A549 (cell line): ENCODE measurements at regions of chr17 and their contacts with region 1.

Region 1: GRCh38 chr17:16453493-16453851 is 38.1 kb downstream of the TRPV2 start:
- DNase-seq: no peak
- ATAC-seq: no peak
- H3K4me3 ChIP-seq: no peak overlapping the region
- H3K27ac ChIP-seq: no peak overlapping the region
- H3K4me1 ChIP-seq: no peaks in the 10 kb centered on the region
- CTCF ChIP-seq: no peak
- EP300 ChIP-seq: no peak
- POLR2A ChIP-seq: no peak
- RAD21 ChIP-seq: no peak

Region 2: DNA sequence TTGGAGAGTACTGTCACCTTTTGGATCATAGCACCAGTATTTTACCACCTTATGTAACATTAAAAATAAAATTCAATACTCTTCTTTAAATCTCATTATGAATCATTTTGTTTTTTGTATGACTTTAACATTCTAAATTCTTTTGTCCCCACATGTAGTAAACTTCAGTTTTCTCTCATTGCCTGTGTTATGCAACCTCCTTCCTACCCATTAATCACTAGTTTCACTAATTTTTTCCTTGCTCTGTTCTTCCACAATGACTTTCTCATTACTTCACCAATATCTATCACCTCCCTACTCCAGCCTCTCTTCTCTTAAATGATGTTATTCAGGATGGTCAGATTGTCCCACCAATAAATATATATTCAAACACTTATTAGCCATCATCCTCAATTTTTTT is 385.1 kb before region 1 on chr17:
- CTCF ChIA-PET with region 1: no interaction called
- POLR2A ChIA-PET with region 1: no interaction called
- DNase-seq: no peak
- ATAC-seq: no peak
- H3K4me3 ChIP-seq: no peak overlapping the region
- H3K27ac ChIP-seq: no peak overlapping the region
- H3K4me1 ChIP-seq: no peaks in the 10 kb centered on the region
- CTCF ChIP-seq: no peak
- EP300 ChIP-seq: no peak
- POLR2A ChIP-seq: no peak
- RAD21 ChIP-seq: no peak

Region 3: DNA sequence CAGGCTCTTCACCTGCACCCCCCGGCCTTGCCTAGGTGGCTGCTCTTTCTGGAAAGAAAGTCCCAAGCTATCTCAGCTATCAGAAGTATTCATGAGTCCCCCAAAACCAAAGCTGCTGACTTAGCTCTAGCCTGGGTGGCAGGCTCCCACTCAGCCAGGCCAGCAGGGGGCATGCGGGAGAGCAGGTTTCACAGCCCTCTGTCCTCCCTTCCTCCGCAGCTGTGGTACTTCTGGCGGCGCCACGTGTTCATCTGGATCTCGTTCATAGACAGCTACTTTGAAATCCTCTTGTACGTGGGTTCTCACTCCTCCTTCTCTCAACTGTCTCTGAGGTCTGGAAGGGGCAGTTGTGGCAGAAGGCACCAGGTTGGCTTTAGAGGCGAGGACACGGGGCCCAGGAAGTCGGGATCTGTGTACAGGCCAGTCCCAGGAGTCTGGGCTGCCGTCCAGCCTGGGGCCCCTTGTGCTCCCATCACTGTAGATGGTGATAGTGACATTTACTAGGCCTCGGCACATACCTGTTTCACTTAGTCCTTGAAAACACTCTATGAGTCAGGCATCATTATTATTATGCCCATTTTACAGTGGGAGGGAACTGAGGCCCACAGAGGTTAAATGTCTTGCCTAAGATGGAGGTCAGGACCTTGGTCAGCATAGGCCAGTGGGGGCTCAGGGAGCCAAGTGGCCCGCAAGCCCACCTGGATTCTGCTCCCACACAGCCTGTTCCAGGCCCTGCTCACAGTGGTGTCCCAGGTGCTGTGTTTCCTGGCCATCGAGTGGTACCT is 25.2 kb before region 1 on chr17:
- CTCF ChIA-PET with region 1: interaction called, 15 read pairs
- POLR2A ChIA-PET with region 1: no interaction called
- DNase-seq: peak; percentile 83 to 93
- ATAC-seq: peak; percentile 83 to 96
- H3K4me3 ChIP-seq: no peak overlapping the region
- H3K27ac ChIP-seq: peak overlapping the region; percentile 50 to 70; a peak in 5 of 6 replicates
- H3K4me1 ChIP-seq: 0 out of 3 replicates have a peak, but pooled peaks cover 3% of the 10 kb centered on the region
- CTCF ChIP-seq: peak; percentile 71
- EP300 ChIP-seq: no peak
- POLR2A ChIP-seq: no peak
- RAD21 ChIP-seq: peak; percentile 48 to 61; a peak in 4 of 5 replicates

Region 4: GRCh38 chr17:16438557-16439302 is 14.7 kb before region 1 on chr17:
- CTCF ChIA-PET with region 1: interaction called, 24 read pairs
- POLR2A ChIA-PET with region 1: interaction called, 10 read pairs
- DNase-seq: peak; percentile 100
- ATAC-seq: peak; percentile 84 to 89
- H3K4me3 ChIP-seq: peak overlapping the region; percentile 75
- H3K27ac ChIP-seq: peak overlapping the region; percentile 90 to 99
- H3K4me1 ChIP-seq: peaks cover 37% of the 10 kb centered on the region
- CTCF ChIP-seq: no peak
- EP300 ChIP-seq: no peak
- POLR2A ChIP-seq: peak; percentile 96
- RAD21 ChIP-seq: no peak; a peak in 1 of 5 replicates

Region 5: GRCh38 chr17:16470265-16470664 is 16.8 kb after region 1 on chr17:
- CTCF ChIA-PET with region 1: interaction called, 89 read pairs
- POLR2A ChIA-PET with region 1: no interaction called
- DNase-seq: no peak
- ATAC-seq: peak in 1 of 2 experiments; percentile 31; a peak in 2 of 6 replicates
- H3K4me3 ChIP-seq: no peak overlapping the region
- H3K27ac ChIP-seq: no peak overlapping the region
- H3K4me1 ChIP-seq: 0 out of 3 replicates have a peak, but pooled peaks cover 3% of the 10 kb centered on the region
- CTCF ChIP-seq: no peak
- EP300 ChIP-seq: no peak
- POLR2A ChIP-seq: no peak
- RAD21 ChIP-seq: no peak

Region 6: GRCh38 chr17:16477255-16477654 is 23.8 kb after region 1 on chr17:
- CTCF ChIA-PET with region 1: interaction called, 42 read pairs
- POLR2A ChIA-PET with region 1: no interaction called
- DNase-seq: peak; percentile 69 to 88
- ATAC-seq: peak; percentile 83 to 92
- H3K4me3 ChIP-seq: no peak overlapping the region
- H3K27ac ChIP-seq: peak overlapping the region; percentile 69 to 89
- H3K4me1 ChIP-seq: peaks cover 12% of the 10 kb centered on the region
- CTCF ChIP-seq: no peak
- EP300 ChIP-seq: no peak
- POLR2A ChIP-seq: no peak
- RAD21 ChIP-seq: no peak

Region 7: DNA sequence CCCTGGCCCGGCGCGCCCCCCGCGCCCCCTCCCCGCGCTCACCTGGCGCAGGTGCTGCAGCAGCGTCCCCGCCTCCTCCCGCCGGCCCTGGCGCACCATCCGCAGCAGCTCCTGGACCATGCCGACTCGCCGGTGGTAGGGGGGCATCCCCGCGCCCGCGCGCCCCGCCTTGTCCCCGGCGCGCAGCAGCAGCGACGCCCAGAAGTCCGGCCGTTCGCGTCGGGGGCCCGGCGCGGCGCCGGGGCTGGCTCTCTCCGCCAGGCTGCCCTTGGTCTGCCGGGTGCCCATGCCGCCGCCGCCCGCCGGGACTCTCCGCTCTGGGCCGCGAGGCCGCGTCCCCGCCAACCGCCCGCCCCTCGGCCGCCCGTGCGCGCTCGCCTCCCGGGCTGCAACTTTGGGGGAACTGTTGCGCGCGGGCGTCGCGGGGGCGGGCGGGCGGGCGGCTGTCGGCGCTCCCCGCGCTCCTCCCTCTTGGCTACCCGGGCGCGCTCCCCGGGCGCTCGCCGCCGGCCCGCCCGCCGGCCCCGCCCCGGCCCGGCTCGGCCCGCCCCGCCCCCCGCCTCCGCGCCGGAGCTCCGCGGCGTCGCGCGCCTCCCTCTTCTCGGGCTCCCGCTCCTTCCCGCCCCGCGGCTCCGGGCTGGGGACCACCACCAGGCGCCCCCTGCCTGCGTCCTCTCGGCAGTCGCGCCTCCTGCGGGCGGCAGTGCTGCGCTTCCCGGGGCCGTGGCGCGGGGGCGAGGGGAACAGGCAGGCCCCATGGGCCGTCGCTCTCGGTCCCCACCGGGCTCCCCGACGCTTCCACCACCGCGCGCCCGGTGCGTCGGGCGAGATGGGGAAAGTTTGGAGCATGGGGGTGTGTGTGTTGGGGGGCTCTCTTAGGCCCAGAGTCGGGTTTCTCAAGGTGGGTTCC is 38.5 kb after region 1 on chr17 and contains the start of gene LRRC75A:
- CTCF ChIA-PET with region 1: interaction called, 41 read pairs
- POLR2A ChIA-PET with region 1: interaction called, 4 read pairs
- DNase-seq: peak in 1 of 2 experiments; percentile 53
- ATAC-seq: peak; percentile 73 to 82
- H3K4me3 ChIP-seq: peak within 1 kb of the TSS; percentile 94
- H3K27ac ChIP-seq: peak within 1 kb of the TSS; percentile 77 to 85
- H3K4me1 ChIP-seq: peaks cover 5% of the 10 kb centered on the region; the same call in 2 of the 3 replicates
- CTCF ChIP-seq: no peak
- EP300 ChIP-seq: no peak
- POLR2A ChIP-seq: peak; percentile 17; the same call in 1 of the 2 replicates
- RAD21 ChIP-seq: no peak
- polyA plus RNA-seq, gene LRRC75A: 0.65 and 0.78 TPM in 2 replicates

Region 8: GRCh38 chr17:16589097-16589969 is 135.9 kb after region 1 on chr17:
- CTCF ChIA-PET with region 1: interaction called, 23 read pairs
- POLR2A ChIA-PET with region 1: no interaction called
- DNase-seq: peak; percentile 92 to 93
- ATAC-seq: peak; percentile 93 to 94
- H3K4me3 ChIP-seq: peak overlapping the region; percentile 55
- H3K27ac ChIP-seq: peak overlapping the region; percentile 76 to 87
- H3K4me1 ChIP-seq: 0 out of 3 replicates have a peak, but pooled peaks cover 3% of the 10 kb centered on the region
- CTCF ChIP-seq: peak; percentile 96
- EP300 ChIP-seq: no peak
- POLR2A ChIP-seq: peak; percentile 68
- RAD21 ChIP-seq: peak; percentile 74 to 79